ENCODE measurements at regions of chr7 and their contacts with region 1.

Region 1: GRCh38 chr7:9488555-9488954 is 1055.1 kb downstream of the NXPH1 start:
- DNase-seq: no peak
- H3K4me3 ChIP-seq: no peak overlapping the region
- CTCF ChIP-seq: no peak
- POLR2A ChIP-seq: no peak

Region 2: GRCh38 chr7:11474902-11475585 is 1986.5 kb after region 1 on chr7:
- intact Hi-C with region 1: loop called (anchors 5 kb)
- DNase-seq: no peak
- H3K4me3 ChIP-seq: no peak overlapping the region
- CTCF ChIP-seq: no peak
- POLR2A ChIP-seq: no peak

Measured in lower leg skin (tissue), 4 donors.